OCI-LY7 (cell line): ENCODE measurements at regions of chr9 and their contacts with region 1.

Region 1: GRCh38 chr9:33452828-33453271 is 5.5 kb upstream of the AQP3 start:
- DNase-seq: peak; percentile 77
- H3K4me3 ChIP-seq: peak overlapping the region; percentile 10
- H3K27ac ChIP-seq: peak overlapping the region; percentile 75
- H3K4me1 ChIP-seq: peaks cover 30% of the 10 kb centered on the region
- CTCF ChIP-seq: peak; percentile 97

Region 2: GRCh38 chr9:33297432-33297831 is 155.4 kb before region 1 on chr9:
- CTCF ChIA-PET with region 1: interaction called, 3 read pairs
- POLR2A ChIA-PET with region 1: interaction called, 6 read pairs
- intact Hi-C with region 1: loop called (anchors 2 kb)
- DNase-seq: peak; percentile 94
- H3K4me3 ChIP-seq: peak overlapping the region; percentile 62
- H3K27ac ChIP-seq: peak overlapping the region; percentile 95
- H3K4me1 ChIP-seq: peaks cover 72% of the 10 kb centered on the region
- CTCF ChIP-seq: no peak

Region 3: DNA sequence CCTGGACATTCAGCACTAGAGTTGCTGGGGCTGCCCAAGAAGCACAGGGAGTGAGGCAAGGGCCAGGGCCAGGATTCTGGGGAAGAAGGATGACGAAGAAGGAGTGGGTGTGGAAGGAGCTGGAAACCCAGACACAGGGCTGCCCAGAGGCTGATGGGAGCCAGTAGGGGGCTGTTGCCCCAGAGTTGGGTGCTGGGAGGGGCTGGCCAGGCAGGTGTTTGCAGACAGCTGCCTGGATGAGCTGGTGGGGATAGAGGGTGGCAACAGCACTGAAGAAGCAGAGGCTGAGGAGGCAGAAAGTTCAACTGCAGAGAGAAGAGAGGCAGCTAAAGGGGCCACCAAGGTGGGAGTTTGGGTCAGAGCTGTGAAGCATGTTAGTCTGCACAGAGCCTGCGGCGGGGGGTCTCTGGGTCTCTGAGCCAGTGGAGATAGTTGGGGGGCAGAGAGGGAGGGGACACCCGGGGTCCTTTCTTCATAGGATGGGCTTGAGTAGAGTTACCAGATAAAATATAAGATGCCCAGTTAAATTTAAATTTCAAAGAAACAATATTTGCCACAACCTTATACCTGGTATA is 48.0 kb before region 1 on chr9:
- CTCF ChIA-PET with region 1: no interaction called
- POLR2A ChIA-PET with region 1: interaction called, 3 read pairs
- intact Hi-C with region 1: loop called (anchors 1 kb)
- DNase-seq: peak; percentile 13
- H3K4me3 ChIP-seq: no peak overlapping the region
- H3K27ac ChIP-seq: no peak overlapping the region
- H3K4me1 ChIP-seq: no peaks in the 10 kb centered on the region
- CTCF ChIP-seq: no peak

Region 4: DNA sequence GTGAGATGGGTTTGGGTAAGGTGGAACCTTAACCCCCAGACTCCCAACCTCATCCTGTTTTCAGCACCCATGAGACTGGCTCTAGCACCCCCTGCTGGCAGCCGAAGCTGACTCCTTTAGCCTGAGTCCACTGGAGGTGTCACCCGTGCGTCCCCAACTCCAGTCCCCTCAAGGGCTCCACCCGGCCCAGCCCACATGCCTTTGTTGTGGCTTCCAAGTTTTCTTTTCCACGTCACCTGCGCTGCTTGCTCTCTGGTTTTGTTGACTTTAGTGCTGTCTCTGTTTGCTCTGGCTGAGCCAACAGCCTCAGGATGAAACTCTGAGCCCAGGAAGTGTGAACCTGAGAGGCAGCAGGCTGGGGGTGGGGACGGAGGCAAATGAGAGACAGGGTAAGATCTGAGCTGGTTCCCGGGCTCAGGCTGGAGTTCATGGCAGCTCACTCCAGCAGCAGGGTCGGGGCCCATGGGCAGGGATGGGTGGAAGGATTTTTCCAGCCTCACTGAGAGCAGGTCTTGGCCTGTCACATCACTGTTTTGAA is 37.3 kb before region 1 on chr9:
- CTCF ChIA-PET with region 1: interaction called, 17 read pairs
- POLR2A ChIA-PET with region 1: no interaction called
- intact Hi-C with region 1: loop called (anchors 2 kb)
- DNase-seq: peak; percentile 81
- H3K4me3 ChIP-seq: no peak overlapping the region
- H3K27ac ChIP-seq: no peak overlapping the region
- H3K4me1 ChIP-seq: peaks cover 14% of the 10 kb centered on the region
- CTCF ChIP-seq: peak; percentile 93

Region 5: GRCh38 chr9:33466565-33467495 is 14.0 kb after region 1 on chr9:
- CTCF ChIA-PET with region 1: interaction called, 28 read pairs
- POLR2A ChIA-PET with region 1: interaction called, 50 read pairs
- intact Hi-C with region 1: no loop called
- DNase-seq: peak; percentile 60
- H3K4me3 ChIP-seq: no peak overlapping the region
- H3K27ac ChIP-seq: no peak overlapping the region
- H3K4me1 ChIP-seq: peaks cover 1% of the 10 kb centered on the region
- CTCF ChIP-seq: peak; percentile 83

Region 6: DNA sequence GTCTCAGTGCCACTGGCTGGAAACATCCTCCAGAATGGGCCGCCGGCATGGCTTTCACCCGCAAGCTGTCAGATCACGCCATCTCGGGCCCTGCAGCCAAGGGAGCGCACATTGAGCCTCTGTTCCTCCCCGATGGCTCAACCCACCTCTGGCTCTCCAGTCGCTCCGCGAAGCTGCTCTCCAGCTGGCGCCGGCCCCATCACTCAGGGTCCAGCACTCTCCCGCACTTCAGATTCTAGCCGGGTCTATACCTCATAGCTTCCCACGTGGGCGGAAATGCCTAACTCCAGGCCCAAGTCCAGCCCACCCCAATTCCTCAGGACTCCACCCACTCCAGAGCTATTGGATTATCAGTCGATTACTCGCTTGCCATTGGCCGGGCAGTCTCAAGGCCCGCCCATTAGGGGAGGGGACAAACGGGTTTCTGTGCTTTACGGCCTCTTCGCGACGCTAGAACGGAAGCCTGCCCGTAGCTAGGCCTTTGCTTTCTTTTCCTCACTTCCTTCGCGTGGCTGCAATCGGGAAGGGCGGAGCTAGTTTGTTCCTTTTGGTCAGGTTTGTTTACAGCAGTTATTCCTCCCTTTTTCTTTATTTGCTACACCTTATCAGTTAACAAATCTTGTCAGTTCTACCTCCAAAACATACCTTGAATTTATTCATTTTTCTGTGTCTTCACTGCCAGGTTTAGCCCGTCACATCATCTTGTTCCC is 20.9 kb after region 1 on chr9 and contains the start of gene NOL6:
- CTCF ChIA-PET with region 1: interaction called, 28 read pairs
- POLR2A ChIA-PET with region 1: interaction called, 50 read pairs
- intact Hi-C with region 1: no loop called
- DNase-seq: peak; percentile 99
- H3K4me3 ChIP-seq: peak within 1 kb of the TSS; percentile 85
- H3K27ac ChIP-seq: no peak within 1 kb of the TSS
- H3K4me1 ChIP-seq: peaks cover 12% of the 10 kb centered on the region
- CTCF ChIP-seq: no peak
- total RNA-seq, gene NOL6: 26.4 and 28.8 TPM in 2 replicates